Heart right ventricle (tissue), 16 donors: ENCODE measurements at regions of chr22 and their contacts with region 1.

Region 1: GRCh38 chr22:33302049-33302545 is 243.9 kb upstream of the SYN3 start:
- DNase-seq: peak; percentile 82 to 85
- ATAC-seq: peak; percentile 86 to 92 (median 90)
- H3K4me3 ChIP-seq: peak overlapping the region in 2 of 10 donors; percentile 3 to 16
- H3K27ac ChIP-seq: peak overlapping the region in 7 of 10 donors; percentile 6 to 72 (median 57)
- H3K4me1 ChIP-seq: peaks cover 5 to 35% (median 16%) of the 10 kb centered on the region in 9 donors
- H3K27me3 ChIP-seq: no peaks in the 10 kb centered on the region
- CTCF ChIP-seq: peak; percentile 90 to 98 (median 96)

Region 2: GRCh38 chr22:33180356-33180755 is 121.7 kb before region 1 on chr22:
- intact Hi-C with region 1: no loop called
- DNase-seq: no peak
- ATAC-seq: no peak
- H3K4me3 ChIP-seq: no peak overlapping the region
- H3K27ac ChIP-seq: no peak overlapping the region
- H3K4me1 ChIP-seq: no peaks in the 10 kb centered on the region
- H3K27me3 ChIP-seq: no peaks in the 10 kb centered on the region
- CTCF ChIP-seq: no peak

Region 3: GRCh38 chr22:33409079-33409478 is 107.0 kb after region 1 on chr22:
- intact Hi-C with region 1: no loop called
- DNase-seq: no peak
- ATAC-seq: no peak
- H3K4me3 ChIP-seq: no peak overlapping the region
- H3K27ac ChIP-seq: no peak overlapping the region
- H3K4me1 ChIP-seq: peaks cover 0 to 15% (median 9%) of the 10 kb centered on the region in 9 donors
- H3K27me3 ChIP-seq: no peaks in the 10 kb centered on the region
- CTCF ChIP-seq: no peak

Region 4: DNA sequence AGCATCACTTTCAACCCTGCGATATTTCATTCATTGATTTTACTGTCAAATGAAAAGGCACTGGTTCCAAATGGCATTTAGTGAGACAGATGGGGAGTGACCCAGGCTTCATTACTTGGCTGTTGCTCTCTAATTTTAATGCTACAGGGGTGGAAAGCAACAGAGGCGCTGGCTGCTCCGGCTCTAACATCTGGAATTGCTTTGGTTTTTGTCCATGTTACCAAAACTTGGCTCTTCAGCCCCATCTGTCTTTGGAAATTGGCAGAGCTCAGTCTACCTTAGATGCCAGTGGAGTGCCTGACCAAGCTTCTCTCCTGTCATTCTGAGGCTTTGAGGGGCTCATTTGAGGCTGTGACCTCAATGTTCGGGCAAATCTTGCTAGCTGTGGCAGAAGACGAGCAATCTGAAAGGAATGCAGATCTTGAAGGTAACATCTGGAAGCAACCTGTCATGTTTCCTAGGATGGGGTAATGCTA is 165.6 kb after region 1 on chr22:
- intact Hi-C with region 1: loop called in 1 of 10 experiments (anchors 5 kb)
- DNase-seq: no peak
- ATAC-seq: peak in 3 of 8 donors; percentile 14 to 51 (median 24)
- H3K4me3 ChIP-seq: no peak overlapping the region
- H3K27ac ChIP-seq: peak overlapping the region in 1 of 10 donors; percentile 34
- H3K4me1 ChIP-seq: peaks cover 4 to 41% (median 30%) of the 10 kb centered on the region in 9 donors
- H3K27me3 ChIP-seq: no peaks in the 10 kb centered on the region
- CTCF ChIP-seq: peak in 6 of 9 donors; percentile 18 to 37 (median 22)

Region 5: DNA sequence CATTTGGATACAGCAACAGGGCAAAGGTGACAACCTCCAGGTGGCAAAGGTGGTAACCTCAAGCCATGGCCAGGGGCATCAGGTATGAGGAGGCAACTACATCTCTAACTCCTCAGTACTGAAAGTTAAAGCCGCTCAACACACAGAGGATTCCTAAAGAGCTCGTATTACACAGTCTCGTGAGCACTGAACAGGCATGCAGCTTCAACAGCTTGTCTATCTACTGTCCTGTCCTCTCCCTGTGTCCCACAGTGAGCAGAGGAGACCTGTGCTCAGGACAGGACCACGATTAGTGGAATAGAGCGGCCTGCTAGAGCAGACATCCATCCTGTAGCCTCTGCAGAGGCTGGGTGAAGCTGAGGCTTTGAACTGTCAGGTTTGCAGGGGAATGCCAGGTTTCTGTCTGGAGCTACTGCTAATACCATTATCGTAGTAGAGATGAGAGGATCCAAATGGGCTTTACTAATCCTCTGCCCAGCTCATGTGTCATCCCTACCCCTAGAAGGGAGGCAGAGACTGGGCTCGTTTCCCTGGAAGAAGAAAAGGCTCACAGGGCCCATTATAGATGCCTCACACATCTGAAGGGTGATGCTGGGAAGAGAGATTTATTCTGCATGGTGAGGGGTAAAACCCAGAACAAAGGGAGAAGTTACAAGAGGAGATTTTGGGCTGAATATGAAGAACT is 203.0 kb after region 1 on chr22:
- intact Hi-C with region 1: loop called in 4 of 10 experiments (anchors 10 kb)
- DNase-seq: no peak
- ATAC-seq: peak in 2 of 8 donors; percentile 33 to 59
- H3K4me3 ChIP-seq: no peak overlapping the region
- H3K27ac ChIP-seq: no peak overlapping the region
- H3K4me1 ChIP-seq: peaks cover 0 to 19% (median 9%) of the 10 kb centered on the region in 9 donors
- H3K27me3 ChIP-seq: no peaks in the 10 kb centered on the region
- CTCF ChIP-seq: no peak

Region 6: DNA sequence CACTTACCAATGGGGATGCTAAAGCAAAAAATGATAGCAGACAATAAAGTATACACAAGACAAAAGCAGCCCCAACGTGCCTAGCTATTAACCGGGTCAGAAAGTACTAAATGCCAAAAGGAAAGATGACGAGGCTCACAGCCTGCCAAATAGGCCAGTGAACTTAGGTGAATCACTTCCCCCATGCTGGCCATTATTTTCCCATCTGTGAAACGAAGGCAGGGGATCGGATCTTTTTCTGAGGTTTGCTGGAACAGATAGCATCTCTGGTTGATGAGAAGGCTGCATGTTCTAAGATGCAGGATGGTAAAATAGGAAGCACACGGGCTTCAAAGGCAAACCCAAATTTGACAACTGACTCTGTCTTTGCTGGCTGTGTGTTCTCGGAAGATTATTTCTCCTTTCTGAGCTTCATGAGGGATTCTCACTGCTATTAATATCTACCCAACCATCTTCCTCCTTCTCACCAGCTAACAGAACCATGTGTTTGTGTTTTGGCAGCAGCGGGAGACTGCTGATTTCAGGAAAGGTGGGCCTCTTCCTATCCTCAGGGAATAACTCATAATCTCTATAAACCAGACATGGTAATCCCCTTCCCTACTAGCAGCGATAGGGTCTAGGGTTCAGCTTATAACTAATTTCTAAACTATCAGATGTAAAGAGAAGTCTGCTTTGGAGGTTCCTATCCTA is 227.5 kb after region 1 on chr22:
- intact Hi-C with region 1: loop called in 2 of 10 experiments (anchors 10 kb)
- DNase-seq: peak in 1 of 2 donors; percentile 23
- ATAC-seq: peak; percentile 41 to 88 (median 57)
- H3K4me3 ChIP-seq: no peak overlapping the region
- H3K27ac ChIP-seq: peak overlapping the region in 5 of 10 donors; percentile 20 to 55 (median 52)
- H3K4me1 ChIP-seq: peaks cover 0 to 33% (median 20%) of the 10 kb centered on the region in 9 donors
- H3K27me3 ChIP-seq: no peaks in the 10 kb centered on the region
- CTCF ChIP-seq: no peak

Region 7: DNA sequence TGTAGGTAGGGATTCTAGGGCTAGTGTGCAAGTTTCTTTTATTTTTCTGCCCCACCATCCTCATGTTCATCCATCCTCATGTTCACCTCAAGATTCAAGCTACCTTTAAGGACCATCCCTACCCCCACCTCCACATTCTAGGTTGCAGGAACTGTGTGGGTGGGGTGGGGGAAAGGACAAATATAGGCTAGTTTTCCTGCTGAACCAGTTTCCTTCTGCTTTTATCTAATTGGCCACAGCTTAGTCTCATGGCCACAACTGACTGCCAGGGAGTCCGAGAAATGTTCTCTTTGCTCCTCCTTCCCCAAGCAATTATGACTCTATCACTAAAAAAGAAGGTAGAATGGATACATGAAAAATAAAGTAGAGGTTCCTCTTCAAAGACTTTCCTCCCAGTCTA is 797.2 kb after region 1 on chr22:
- intact Hi-C with region 1: loop called in 3 of 10 experiments (anchors 5 to 10 kb)
- DNase-seq: no peak
- ATAC-seq: no peak
- H3K4me3 ChIP-seq: no peak overlapping the region
- H3K27ac ChIP-seq: no peak overlapping the region
- H3K4me1 ChIP-seq: no peaks in the 10 kb centered on the region
- H3K27me3 ChIP-seq: peaks cover 0 to 13% (median 4%) of the 10 kb centered on the region in 7 donors
- CTCF ChIP-seq: no peak

Region 8: GRCh38 chr22:34111210-34111824 is 809.2 kb after region 1 on chr22:
- intact Hi-C with region 1: loop called in 9 of 10 experiments (anchors 5 to 10 kb)
- DNase-seq: peak in 1 of 2 donors; percentile 9
- ATAC-seq: peak in 6 of 8 donors; percentile 46 to 73 (median 61)
- H3K4me3 ChIP-seq: no peak overlapping the region
- H3K27ac ChIP-seq: no peak overlapping the region
- H3K4me1 ChIP-seq: no peaks in the 10 kb centered on the region
- H3K27me3 ChIP-seq: peaks cover 0 to 10% (median 5%) of the 10 kb centered on the region in 7 donors
- CTCF ChIP-seq: peak; percentile 34 to 76 (median 74)